Transverse colon (tissue), 4 donors: ENCODE measurements at regions of chr16 and their contacts with region 1.

Region 1: DNA sequence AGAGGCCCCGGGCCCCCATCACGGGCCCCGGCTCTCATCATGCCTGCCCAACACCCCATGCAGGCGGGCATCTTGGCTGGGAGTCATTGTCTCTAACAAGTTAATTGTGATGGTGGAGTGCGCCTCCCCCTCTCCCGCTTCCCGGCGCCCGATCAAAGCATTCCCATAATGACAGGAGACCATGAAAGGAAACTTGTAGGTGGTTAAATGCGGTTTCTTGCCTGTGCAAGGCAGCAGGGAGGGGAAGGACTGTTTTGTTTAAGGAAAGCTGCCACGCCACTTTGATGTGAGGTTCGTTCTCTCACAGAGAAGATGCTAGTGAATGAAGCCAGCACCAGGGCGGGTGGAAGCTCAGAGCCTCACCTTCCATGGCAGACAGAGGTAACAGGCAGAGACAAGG is 45.4 kb downstream of the C16orf78 start:
- DNase-seq: no peak
- H3K4me3 ChIP-seq: no peak overlapping the region
- H3K27ac ChIP-seq: no peak overlapping the region
- H3K4me1 ChIP-seq: no peaks in the 10 kb centered on the region
- H3K27me3 ChIP-seq: no peaks in the 10 kb centered on the region
- CTCF ChIP-seq: no peak
- EP300 ChIP-seq: no peak
- POLR2A ChIP-seq: no peak

Region 2: GRCh38 chr16:49921791-49922456 is 502.9 kb after region 1 on chr16:
- in situ Hi-C with region 1: loop called (anchors 10 to 25 kb)
- intact Hi-C with region 1: no loop called
- DNase-seq: peak; percentile 80
- H3K4me3 ChIP-seq: no peak overlapping the region
- H3K27ac ChIP-seq: no peak overlapping the region
- H3K4me1 ChIP-seq: no peaks in the 10 kb centered on the region
- H3K27me3 ChIP-seq: no peaks in the 10 kb centered on the region
- CTCF ChIP-seq: peak; percentile 51 to 81 (median 62)
- EP300 ChIP-seq: no peak
- POLR2A ChIP-seq: no peak